ENCODE measurements at regions of chr12 and their contacts with region 1.

Region 1: DNA sequence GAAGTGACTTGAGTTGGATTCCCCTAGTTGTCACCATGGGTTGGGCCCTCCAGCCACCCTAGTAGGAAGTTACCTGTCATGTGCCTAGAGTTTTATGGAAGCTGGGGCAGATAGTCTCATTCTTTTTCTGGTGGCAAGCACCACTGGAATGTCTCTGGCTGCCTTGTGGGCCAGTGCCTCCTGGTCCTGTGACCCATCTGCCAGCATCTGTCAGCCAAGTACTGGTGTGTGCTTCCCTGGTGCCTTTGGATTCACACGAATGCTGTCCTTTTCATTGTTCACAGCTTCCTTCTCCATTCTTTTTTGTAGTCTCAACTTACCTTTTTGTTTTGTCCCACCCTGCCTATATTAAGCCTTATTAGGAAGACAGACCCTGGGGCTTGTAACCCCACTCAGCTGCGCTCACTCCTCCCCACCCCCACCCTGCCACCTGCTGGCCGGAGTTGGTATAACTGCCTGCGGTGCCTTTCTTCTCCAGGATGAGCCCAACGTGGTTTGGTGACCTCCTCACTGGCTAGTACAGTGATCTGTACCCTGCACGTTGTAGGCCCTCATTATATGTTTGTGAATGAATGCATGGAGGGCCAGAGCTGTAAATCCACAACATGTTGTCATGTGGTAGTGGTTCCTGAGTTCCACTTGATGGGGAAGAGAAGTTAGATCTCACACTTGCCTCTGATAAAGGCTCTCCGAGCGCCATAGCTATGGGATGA is 125.7 kb downstream of the TSPAN9 start:
- DNase-seq: no peak
- H3K4me3 ChIP-seq: no peak overlapping the region
- CTCF ChIP-seq: peak; percentile 90

Region 2: GRCh38 chr12:3135522-3136461 is 67.1 kb before region 1 on chr12:
- CTCF ChIA-PET with region 1: interaction called, 43 read pairs
- POLR2A ChIA-PET with region 1: interaction called, 3 read pairs
- DNase-seq: no peak
- H3K4me3 ChIP-seq: no peak overlapping the region
- CTCF ChIP-seq: peak; percentile 75

Region 3: DNA sequence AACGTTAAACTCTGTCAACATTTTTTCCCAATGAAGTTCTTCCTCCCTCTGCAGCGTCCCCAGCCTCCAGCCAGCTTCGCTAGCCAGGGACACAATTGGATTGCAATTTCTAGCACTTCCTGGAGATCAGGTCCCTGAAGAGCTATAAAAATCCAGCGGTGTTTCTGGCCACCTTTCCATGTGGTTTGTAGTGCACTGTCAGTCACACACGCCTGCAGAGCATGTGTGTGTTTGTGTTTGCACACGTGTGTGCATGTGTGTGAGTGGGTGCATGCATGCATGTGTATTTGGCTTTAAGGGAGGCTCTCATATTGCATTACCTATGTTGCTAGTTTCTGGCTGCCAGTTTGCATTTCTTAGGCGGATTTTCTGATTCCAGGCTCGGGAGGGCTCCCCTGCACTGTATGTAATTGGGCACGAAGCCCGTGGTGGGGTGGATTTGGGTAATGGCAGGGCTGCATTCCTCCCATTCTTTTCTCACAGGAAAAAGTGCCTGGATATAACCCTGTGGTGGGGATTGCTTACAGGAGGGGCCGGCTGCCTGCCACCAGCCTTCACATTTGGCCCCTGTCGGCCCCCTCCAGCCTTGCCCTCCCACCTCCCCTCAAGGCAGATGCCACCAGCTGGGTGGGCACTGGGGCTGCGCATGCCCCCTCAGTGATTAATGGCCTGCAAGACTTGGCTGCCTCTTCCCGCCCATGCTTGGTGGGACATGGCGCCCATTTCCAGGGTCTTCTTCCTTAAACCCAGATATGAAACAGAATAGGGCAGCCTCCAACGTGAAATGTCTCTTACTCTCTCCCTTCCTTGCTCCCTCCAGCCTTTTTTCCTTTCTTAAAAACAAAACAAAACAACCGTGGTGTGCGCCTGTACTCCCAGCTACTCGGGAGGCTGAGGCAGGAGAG is 51.7 kb before region 1 on chr12:
- CTCF ChIA-PET with region 1: interaction called, 17 read pairs
- POLR2A ChIA-PET with region 1: no interaction called
- DNase-seq: no peak
- H3K4me3 ChIP-seq: no peak overlapping the region
- CTCF ChIP-seq: no peak

Region 4: GRCh38 chr12:3177778-3178425 is 25.0 kb before region 1 on chr12:
- CTCF ChIA-PET with region 1: interaction called, 131 read pairs
- POLR2A ChIA-PET with region 1: no interaction called
- DNase-seq: no peak
- H3K4me3 ChIP-seq: no peak overlapping the region
- CTCF ChIP-seq: no peak

Region 5: DNA sequence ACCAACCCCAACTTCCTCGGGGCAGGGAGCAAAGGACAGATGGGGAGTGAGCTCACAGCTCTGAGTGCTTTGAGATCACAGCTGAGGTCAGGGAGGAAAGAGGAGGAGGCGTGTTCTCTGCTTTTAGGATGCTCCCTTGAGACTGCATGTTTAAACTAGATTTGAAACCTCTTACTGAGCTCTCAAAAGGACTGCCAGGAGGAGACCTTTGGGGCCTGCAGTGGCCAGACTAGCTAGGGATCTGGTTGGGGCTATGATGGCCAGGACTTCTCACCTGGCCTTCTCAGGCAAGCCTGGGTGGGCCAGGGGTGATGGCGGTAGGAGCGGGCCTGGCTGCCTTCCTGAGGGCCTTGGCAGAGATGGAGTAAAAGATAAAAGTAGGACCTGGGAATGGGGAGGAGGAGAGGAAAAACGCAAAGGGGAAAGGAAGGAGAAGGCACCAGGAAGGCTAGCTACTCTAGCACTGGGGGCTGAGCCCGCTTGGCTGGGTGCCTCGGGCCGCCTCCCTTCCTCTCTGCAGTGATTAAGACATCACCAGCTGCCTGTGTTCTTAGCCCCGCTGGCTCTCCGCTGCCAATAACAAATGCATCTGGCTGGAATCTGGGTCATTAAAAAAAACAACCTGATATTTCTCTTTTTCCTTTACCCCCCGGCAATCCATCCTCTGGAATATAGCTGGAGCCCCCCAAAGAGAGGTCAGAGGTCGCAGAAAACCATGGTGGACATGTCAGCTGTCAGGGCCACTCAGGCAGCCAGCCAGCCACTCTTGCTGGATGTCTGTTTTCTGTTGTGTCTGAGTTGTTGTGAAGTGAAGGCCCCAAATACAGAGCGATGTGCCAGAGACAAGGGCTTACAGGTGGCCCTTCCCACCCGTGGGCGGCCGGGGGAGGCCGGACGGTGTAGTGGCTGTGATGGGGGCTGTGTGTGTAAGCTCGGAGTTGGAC is 15.6 kb after region 1 on chr12:
- CTCF ChIA-PET with region 1: interaction called, 108 read pairs
- POLR2A ChIA-PET with region 1: no interaction called
- DNase-seq: no peak
- H3K4me3 ChIP-seq: no peak overlapping the region
- CTCF ChIP-seq: no peak

Region 6: DNA sequence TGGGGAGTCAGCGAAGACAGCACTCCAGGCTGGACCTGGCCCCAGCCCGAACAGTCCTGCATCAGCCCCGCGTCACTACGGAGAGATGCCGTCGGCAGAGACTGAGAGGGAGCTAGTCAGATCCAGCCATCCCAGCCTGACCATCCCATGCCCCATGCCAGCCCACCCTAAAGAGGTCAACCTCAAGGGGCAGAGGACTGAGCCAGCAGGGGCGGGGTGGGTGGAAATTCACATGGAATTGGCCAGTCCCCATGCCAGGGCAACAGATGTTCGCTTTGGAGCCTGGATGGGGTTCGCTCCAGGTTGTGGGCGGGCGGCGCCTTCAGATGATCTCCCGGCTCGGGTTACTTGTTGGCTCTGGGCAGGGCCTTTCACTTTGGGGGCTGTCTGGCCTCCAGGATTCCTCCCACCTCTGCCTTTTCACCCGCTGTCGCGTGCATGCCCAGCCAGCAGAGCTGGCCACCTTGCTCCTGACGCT is 28.5 kb after region 1 on chr12:
- CTCF ChIA-PET with region 1: interaction called, 28 read pairs
- POLR2A ChIA-PET with region 1: no interaction called
- DNase-seq: no peak
- H3K4me3 ChIP-seq: no peak overlapping the region
- CTCF ChIP-seq: no peak

Region 7: DNA sequence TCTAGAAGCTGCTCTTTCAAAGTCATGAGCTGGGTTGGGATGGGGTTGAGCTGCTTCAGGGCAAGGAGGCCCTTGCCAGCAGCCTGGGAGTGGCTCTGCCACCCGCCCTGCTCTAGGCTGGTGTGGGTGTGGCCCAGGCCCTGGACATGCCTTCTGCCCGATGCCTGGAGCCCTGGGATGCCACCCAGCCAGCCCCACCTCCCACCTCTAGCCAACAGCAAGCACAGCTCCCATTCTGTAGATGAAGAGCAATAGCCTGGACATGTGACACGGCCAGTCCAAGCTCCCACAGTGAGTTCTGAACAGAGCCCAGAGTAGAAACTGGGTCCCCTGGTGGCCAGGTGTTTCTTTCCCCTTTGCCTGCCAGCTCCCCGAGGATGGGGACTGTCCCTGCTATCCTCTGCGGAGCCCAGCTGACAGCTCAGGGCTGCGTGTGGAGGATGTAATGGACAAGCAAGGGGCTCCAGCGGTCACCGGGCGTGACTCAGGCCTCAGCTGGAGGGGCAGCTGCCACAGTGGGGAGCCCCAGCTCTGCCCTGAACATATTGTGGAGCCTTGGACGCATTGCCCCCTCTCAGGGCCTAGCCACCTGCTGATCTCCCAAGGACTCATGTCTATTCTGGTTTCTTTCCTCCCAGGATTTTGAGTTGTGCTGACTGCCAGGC is 39.4 kb after region 1 on chr12:
- CTCF ChIA-PET with region 1: interaction called, 28 read pairs
- POLR2A ChIA-PET with region 1: no interaction called
- DNase-seq: no peak
- H3K4me3 ChIP-seq: no peak overlapping the region
- CTCF ChIP-seq: no peak

Measured in AG04449 (cell line).